PC-9 (cell line): ENCODE measurements at regions of chr1 and their contacts with region 1.

Region 1: DNA sequence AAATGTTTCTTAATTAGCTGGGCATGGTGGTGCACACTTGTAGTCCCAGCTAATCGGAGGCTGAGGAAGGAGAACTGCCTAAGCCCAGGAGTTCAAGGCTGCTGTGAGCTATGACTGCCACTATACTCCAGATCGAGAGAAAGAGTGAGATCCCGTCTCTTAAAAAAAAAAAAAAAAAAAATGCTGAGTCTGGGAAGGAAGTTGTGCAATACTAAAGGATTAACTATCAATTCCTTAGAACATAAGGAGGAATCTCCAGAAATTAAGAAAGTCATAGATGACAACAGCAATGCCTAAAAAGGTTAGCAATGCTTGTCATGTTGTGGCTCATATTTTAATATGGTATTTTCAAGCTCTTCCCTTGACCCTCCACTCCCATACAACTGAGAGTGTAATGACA is 5.3 kb downstream of the LUZP1 start:
- DNase-seq: no peak
- H3K4me3 ChIP-seq: no peak overlapping the region
- H3K27ac ChIP-seq: no peak overlapping the region
- H3K4me1 ChIP-seq: peaks cover 16% of the 10 kb centered on the region
- H3K27me3 ChIP-seq: no peaks in the 10 kb centered on the region
- CTCF ChIP-seq: no peak

Region 2: DNA sequence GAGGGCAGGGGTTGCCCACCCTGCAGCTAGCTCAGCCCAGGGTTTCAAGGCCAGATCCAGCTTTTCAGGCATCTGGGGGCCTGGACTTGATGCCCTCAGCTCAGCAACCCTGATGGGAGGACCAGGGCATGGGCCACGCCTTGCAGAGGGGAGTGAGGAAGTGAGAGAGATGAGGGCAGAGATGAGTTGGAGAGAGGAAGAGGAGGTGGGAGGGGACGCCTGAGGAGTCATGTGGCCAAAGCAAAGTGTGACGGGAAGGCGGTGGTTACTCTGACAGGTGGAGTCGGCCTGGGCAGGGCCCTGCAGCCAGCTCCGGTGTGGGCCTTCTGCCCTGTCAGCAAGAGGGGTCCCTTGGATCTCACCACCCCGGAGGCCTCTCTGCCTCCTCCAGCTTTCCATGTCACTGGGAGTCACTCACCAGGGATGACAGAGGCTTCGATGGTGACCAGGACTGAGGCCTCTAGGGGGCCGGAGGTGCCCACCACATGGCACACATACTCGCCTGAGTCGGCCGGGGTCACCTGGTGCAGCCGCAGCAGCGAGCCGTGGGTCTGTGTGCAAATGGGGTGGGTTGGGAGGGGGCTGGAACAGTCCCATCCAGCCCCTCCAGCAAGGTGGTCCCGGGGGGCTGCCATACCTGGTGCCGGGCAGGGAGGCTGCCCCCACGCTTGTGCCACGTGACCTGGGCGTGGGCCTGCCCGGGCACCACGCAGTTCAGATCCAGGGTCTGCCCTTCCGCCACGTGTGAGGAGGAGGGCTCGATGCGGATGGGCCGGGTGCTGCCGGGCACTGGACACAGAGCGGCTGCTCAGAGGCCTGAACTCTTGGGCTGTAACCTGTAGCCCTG is 1310.9 kb before region 1 on chr1:
- CTCF ChIA-PET with region 1: interaction called, 11 read pairs
- POLR2A ChIA-PET with region 1: no interaction called
- intact Hi-C with region 1: no loop called
- DNase-seq: no peak
- H3K4me3 ChIP-seq: no peak overlapping the region
- H3K27ac ChIP-seq: no peak overlapping the region
- H3K4me1 ChIP-seq: no peaks in the 10 kb centered on the region; the same call in 1 of the 2 replicates
- H3K27me3 ChIP-seq: no peaks in the 10 kb centered on the region
- CTCF ChIP-seq: no peak

Region 3: GRCh38 chr1:23118957-23119792 is 44.2 kb before region 1 on chr1:
- CTCF ChIA-PET with region 1: no interaction called
- POLR2A ChIA-PET with region 1: interaction called, 3 read pairs
- intact Hi-C with region 1: loop called (anchors 2 kb)
- DNase-seq: no peak
- H3K4me3 ChIP-seq: no peak overlapping the region
- H3K27ac ChIP-seq: no peak overlapping the region
- H3K4me1 ChIP-seq: peaks cover 16% of the 10 kb centered on the region
- H3K27me3 ChIP-seq: no peaks in the 10 kb centered on the region
- CTCF ChIP-seq: no peak